Tibial artery (tissue), 4 donors: ENCODE measurements at regions of chr9 and their contacts with region 1.

Region 1: GRCh38 chr9:115517335-115518075 is 399.5 kb upstream of the TNC start:
- DNase-seq: no peak
- H3K4me3 ChIP-seq: no peak overlapping the region
- H3K27ac ChIP-seq: peak overlapping the region in 1 of 2 donors; percentile 75
- H3K4me1 ChIP-seq: peaks cover 0 to 48% (median 10%) of the 10 kb centered on the region in 4 donors
- H3K27me3 ChIP-seq: no peaks in the 10 kb centered on the region
- CTCF ChIP-seq: no peak

Region 2: DNA sequence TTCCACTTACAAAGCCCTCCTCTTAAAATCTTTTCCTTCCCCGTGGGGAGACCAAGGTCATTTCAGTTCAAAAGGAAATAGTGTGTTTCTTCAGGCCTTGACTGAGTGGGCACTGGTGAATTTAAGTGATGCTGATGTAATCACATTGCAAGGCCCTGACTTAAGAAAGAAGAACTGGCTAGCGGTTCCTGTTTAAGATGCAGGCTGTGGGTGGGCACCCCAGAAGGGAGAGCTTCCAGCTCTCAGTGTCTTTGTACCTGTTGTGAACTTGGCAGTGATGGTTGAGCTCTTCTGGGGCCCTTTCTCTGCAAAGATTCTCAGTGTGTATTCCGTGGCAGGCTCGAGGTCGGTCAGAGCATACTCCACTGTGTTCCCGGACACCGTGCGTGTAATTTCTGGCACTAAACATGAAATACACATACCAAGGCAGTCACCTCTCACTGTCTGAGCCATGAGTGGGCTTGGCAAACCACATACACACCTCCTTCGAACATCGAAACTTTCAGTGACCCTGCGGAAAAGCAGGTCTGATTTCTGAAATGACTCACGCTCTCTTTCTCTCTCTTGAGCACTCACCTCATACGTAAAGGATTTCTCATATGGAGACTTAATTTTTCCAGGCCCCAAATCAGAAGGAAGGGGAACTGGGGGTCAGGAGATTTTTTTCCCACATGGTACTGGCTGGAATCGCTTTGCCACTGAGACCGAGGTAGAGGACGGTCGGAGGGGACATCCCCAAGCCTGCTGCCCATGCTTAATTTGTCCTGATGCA is 481.5 kb before region 1 on chr9:
- intact Hi-C with region 1: loop called (anchors 10 kb)
- DNase-seq: no peak
- H3K4me3 ChIP-seq: no peak overlapping the region
- H3K27ac ChIP-seq: peak overlapping the region; percentile 74 to 80
- H3K4me1 ChIP-seq: peaks cover 4 to 61% (median 31%) of the 10 kb centered on the region in 4 donors
- H3K27me3 ChIP-seq: no peaks in the 10 kb centered on the region
- CTCF ChIP-seq: no peak

Region 3: DNA sequence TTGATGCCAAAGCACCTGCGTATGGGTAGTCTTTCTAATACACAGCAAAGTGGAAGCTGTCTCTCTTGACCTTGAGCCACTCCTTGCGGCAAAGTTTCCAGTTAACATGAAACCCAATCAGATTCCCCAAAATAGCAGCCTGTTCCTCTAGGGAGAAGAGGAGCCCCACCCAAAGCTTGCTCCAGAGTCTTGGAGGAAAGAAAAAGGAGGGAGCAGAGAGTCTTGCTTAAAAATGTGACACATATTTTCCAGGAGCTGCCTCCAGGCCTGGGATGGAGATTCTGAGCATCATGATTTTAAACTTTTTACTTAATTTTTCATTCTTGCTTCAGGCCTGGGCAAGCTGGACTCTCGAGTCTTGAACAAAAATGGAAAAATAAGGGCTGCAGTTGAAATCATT is 176.1 kb before region 1 on chr9:
- intact Hi-C with region 1: loop called (anchors 10 kb)
- DNase-seq: peak; percentile 69 to 79
- H3K4me3 ChIP-seq: no peak overlapping the region
- H3K27ac ChIP-seq: peak overlapping the region; percentile 56 to 62
- H3K4me1 ChIP-seq: peaks cover 0 to 34% (median 20%) of the 10 kb centered on the region in 4 donors
- H3K27me3 ChIP-seq: no peaks in the 10 kb centered on the region
- CTCF ChIP-seq: no peak

Region 4: GRCh38 chr9:115442054-115442453 is 75.5 kb before region 1 on chr9:
- intact Hi-C with region 1: no loop called
- DNase-seq: no peak
- H3K4me3 ChIP-seq: no peak overlapping the region
- H3K27ac ChIP-seq: peak overlapping the region; percentile 71
- H3K4me1 ChIP-seq: peaks cover 0 to 37% (median 5%) of the 10 kb centered on the region in 4 donors
- H3K27me3 ChIP-seq: no peaks in the 10 kb centered on the region
- CTCF ChIP-seq: no peak

Region 5: DNA sequence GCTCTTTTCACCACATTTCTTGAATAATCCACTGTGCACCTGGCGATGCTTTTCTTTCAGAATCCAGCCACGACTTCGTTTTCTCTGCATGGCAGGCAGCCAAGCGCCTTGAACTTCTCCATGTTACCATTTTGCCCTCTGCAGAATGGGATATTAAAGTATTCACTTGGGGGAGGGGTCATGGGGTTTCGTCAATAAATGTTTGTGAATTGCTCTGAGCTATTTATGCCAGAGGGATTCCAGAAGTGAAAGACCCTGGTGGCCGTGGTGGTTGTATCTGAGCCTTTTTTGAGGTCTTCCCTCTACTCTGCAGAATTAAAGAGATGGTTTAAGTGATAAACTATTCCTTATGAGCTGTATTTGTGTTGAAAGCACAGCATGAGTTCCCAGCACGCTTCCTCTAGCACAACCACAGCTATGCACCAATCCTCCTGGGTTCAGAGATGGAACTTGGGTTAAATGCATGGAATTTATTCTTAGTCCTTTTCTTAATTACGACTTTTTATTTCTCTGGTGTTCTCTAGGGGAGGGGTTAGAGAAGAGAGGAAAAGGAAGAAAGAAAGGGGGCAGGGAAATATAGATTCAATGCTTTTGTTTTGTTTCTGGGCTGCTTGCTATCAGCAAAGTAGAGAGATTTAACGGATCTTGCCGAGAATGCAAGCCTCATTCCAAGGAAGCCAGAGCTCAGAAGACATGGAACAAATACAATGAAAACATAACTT is 78.7 kb after region 1 on chr9:
- intact Hi-C with region 1: no loop called
- DNase-seq: no peak
- H3K4me3 ChIP-seq: no peak overlapping the region
- H3K27ac ChIP-seq: peak overlapping the region in 1 of 2 donors; percentile 1
- H3K4me1 ChIP-seq: peaks cover 0 to 32% (median 10%) of the 10 kb centered on the region in 4 donors
- H3K27me3 ChIP-seq: no peaks in the 10 kb centered on the region
- CTCF ChIP-seq: no peak

Region 6: GRCh38 chr9:115712981-115713380 is 195.5 kb after region 1 on chr9:
- intact Hi-C with region 1: no loop called
- DNase-seq: no peak
- H3K4me3 ChIP-seq: no peak overlapping the region
- H3K27ac ChIP-seq: no peak overlapping the region
- H3K4me1 ChIP-seq: peaks cover 0 to 12% (median 0%) of the 10 kb centered on the region in 4 donors
- H3K27me3 ChIP-seq: no peaks in the 10 kb centered on the region
- CTCF ChIP-seq: no peak